ENCODE measurements at regions of chr15 and their contacts with region 1.

Region 1: GRCh38 chr15:60179786-60180391 is 175.8 kb downstream of the FOXB1 start:
- DNase-seq: peak; percentile 32
- H3K4me3 ChIP-seq: no peak overlapping the region
- H3K27ac ChIP-seq: no peak overlapping the region
- H3K4me1 ChIP-seq: peaks cover 6% of the 10 kb centered on the region
- H3K27me3 ChIP-seq: no peaks in the 10 kb centered on the region
- CTCF ChIP-seq: peak; percentile 90 to 98

Region 2: DNA sequence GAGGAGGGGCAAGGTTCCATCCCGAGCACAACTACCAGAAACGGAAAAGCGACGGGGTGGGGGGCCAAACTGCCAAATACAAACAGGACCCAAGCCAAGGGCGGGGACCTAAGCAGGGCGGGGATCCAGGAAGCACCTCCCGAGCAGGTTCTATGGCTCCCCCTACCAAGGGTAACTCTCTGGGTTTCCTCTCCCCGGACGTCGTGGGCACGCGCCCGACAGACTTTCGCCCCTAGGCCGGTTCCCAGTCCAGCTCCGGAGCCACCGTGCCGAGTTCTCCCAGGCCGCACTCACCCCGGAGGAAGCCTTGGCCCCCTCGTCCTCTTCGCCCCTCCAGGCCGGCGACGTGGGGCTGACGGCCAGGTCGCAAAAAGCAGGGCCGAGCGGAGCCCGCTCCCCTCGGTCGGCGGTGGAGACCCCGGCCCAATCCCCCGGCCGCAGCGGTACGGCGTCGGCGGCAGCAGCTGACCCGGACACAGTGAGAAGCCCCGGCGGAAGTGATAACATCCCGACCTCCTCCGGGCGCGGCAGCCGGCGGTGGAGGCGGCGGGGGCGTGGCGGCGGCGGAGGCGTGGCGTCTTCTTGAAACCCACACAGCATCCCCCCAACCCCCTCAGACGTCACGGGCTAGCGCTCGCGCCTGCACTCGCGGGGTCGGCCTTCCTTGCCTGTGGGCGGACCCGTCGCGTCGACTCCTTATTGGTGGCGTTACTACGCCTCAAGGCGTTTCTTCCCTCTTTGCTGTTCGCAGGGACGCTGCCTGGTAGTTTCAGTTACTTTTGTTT is 490.9 kb before region 1 on chr15 and contains the start of gene BNIP2:
- CTCF ChIA-PET with region 1: interaction called, 4 read pairs
- dilution Hi-C with region 1: no loop called
- in situ Hi-C with region 1: no loop called
- intact Hi-C with region 1: loop called (anchors 2 kb)
- DNase-seq: peak; percentile 97
- H3K4me3 ChIP-seq: peak within 1 kb of the TSS; percentile 80 to 97 (median 91)
- H3K27ac ChIP-seq: peak within 1 kb of the TSS; percentile 92
- H3K4me1 ChIP-seq: peaks cover 23% of the 10 kb centered on the region
- H3K27me3 ChIP-seq: no peaks in the 10 kb centered on the region
- CTCF ChIP-seq: no peak
- total RNA-seq, gene BNIP2: 78.2 to 107 TPM

Region 3: DNA sequence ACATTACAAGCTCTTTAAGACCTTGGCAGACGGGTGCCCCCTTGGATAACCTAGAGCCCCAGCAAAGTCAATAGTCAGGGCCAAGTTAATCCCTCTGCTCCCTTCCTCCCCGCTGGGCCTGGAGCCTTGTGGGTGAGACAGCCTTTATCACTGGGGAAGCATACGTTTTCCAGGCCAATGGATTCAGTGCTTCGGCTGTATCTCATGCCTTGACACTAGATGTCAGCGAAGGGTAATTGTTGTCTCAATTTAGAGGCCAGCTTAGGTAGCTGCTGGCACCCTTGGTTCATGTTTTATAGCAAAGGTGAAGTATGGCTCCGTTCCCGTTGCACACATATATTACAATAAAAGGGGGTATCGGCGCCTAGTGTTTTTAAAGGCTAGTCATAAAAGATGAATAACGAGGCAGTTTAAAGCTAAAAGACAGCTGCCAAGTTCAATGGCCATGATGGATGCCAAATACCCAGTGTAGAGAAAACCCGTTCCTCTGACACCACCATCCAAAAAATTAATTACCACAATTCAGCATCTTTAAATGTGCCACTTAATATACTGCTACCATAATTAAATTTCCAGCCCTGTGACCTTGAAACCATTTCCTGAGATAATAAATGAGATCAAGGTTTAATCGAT is 438.5 kb before region 1 on chr15:
- CTCF ChIA-PET with region 1: no interaction called
- dilution Hi-C with region 1: no loop called
- in situ Hi-C with region 1: loop called (anchors 10 to 25 kb)
- intact Hi-C with region 1: no loop called
- DNase-seq: peak; percentile 13
- H3K4me3 ChIP-seq: no peak overlapping the region
- H3K27ac ChIP-seq: no peak overlapping the region
- H3K4me1 ChIP-seq: no peaks in the 10 kb centered on the region
- H3K27me3 ChIP-seq: no peaks in the 10 kb centered on the region
- CTCF ChIP-seq: peak; percentile 27 to 56

Region 4: GRCh38 chr15:59917504-59918157 is 262.3 kb before region 1 on chr15:
- CTCF ChIA-PET with region 1: no interaction called
- dilution Hi-C with region 1: no loop called
- in situ Hi-C with region 1: loop called in 1 of 2 experiments (anchors 5 kb)
- intact Hi-C with region 1: loop called (anchors 1 kb)
- DNase-seq: peak; percentile 60
- H3K4me3 ChIP-seq: no peak overlapping the region
- H3K27ac ChIP-seq: no peak overlapping the region
- H3K4me1 ChIP-seq: peaks cover 9% of the 10 kb centered on the region
- H3K27me3 ChIP-seq: no peaks in the 10 kb centered on the region
- CTCF ChIP-seq: peak; percentile 74 to 79

Region 5: DNA sequence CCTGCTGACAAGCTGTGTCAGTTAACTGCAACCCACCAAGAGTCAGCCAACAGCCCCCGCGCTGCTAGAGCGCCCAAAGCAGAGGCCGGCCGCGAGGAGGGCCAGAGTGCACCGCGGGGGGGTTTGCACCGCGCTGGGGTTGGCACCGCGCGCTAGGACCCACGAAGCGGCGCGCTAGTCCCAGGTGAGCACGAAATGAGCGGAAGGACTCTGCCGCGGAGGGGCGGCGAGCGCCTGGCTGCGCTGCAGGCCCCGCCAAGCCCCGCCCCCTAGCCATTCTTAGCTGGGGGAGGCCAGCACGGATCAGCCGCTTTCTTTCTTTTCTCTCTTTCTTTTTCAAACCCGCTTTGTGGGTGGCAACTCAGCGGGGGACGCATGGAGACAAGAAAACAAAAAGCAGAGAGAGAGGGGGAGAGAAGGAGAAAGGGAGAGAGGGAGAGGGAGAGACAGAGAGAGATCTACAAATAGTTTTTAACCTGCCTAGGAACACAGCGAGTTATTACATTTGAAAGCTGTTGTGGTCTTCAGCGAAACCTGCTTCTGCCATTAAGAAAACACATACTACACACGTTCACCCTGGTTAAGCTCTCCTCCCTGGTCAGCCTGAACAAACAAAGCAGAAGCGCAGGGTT is 182.7 kb before region 1 on chr15:
- CTCF ChIA-PET with region 1: no interaction called
- dilution Hi-C with region 1: no loop called
- in situ Hi-C with region 1: no loop called
- intact Hi-C with region 1: loop called (anchors 1 kb)
- DNase-seq: peak; percentile 38
- H3K4me3 ChIP-seq: no peak overlapping the region
- H3K27ac ChIP-seq: no peak overlapping the region
- H3K4me1 ChIP-seq: peaks cover 8% of the 10 kb centered on the region
- H3K27me3 ChIP-seq: peaks cover 91% of the 10 kb centered on the region
- CTCF ChIP-seq: peak in 1 of 2 donors; percentile 32

Region 6: GRCh38 chr15:60091165-60091564 is 88.7 kb before region 1 on chr15:
- CTCF ChIA-PET with region 1: no interaction called
- dilution Hi-C with region 1: no loop called
- in situ Hi-C with region 1: no loop called
- intact Hi-C with region 1: no loop called
- DNase-seq: peak; percentile 97
- H3K4me3 ChIP-seq: no peak overlapping the region
- H3K27ac ChIP-seq: peak overlapping the region; percentile 59
- H3K4me1 ChIP-seq: peaks cover 18% of the 10 kb centered on the region
- H3K27me3 ChIP-seq: no peaks in the 10 kb centered on the region
- CTCF ChIP-seq: no peak

Region 7: DNA sequence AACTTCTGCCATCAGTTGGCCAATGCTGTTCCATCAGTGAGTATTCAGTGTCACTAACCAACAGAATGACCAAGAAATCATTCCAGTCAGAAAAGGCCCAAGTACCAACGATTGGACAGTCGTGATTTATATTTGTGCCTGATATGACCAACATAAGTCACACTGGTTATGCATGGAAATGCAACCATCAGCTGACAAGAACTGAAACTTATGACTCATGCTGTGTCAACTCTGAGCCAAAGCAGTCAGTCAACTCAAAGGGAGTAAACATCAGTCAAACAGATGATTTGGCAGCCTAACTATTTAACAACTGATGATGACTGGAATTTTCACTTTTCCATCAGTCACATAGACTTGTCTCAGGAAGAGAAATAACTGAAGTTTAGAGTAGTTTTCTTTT is 75.5 kb after region 1 on chr15:
- CTCF ChIA-PET with region 1: no interaction called
- dilution Hi-C with region 1: no loop called
- in situ Hi-C with region 1: no loop called
- intact Hi-C with region 1: no loop called
- DNase-seq: peak; percentile 92
- H3K4me3 ChIP-seq: no peak overlapping the region
- H3K27ac ChIP-seq: no peak overlapping the region
- H3K4me1 ChIP-seq: no peaks in the 10 kb centered on the region
- H3K27me3 ChIP-seq: peaks cover 4% of the 10 kb centered on the region
- CTCF ChIP-seq: no peak

Region 8: GRCh38 chr15:61511756-61512155 is 1331.9 kb after region 1 on chr15:
- CTCF ChIA-PET with region 1: no interaction called
- dilution Hi-C with region 1: no loop called
- in situ Hi-C with region 1: no loop called
- intact Hi-C with region 1: no loop called
- DNase-seq: no peak
- H3K4me3 ChIP-seq: no peak overlapping the region
- H3K27ac ChIP-seq: no peak overlapping the region
- H3K4me1 ChIP-seq: no peaks in the 10 kb centered on the region
- H3K27me3 ChIP-seq: no peaks in the 10 kb centered on the region
- CTCF ChIP-seq: no peak